Activated T-helper 2 cell treated with anti-CD3 and anti-CD28 coated beads, Interferon-gamma antibody, Interleukin-2, Interleukin-4, amounts not matched to agents 10 μg/mL and 5 μg/mL and 100 μg/mL, durations not matched to agents 14 hours and 24 hours and 36 hours (primary cell): ENCODE measurements at regions of chr13 and their contacts with region 1.

Region 1: DNA sequence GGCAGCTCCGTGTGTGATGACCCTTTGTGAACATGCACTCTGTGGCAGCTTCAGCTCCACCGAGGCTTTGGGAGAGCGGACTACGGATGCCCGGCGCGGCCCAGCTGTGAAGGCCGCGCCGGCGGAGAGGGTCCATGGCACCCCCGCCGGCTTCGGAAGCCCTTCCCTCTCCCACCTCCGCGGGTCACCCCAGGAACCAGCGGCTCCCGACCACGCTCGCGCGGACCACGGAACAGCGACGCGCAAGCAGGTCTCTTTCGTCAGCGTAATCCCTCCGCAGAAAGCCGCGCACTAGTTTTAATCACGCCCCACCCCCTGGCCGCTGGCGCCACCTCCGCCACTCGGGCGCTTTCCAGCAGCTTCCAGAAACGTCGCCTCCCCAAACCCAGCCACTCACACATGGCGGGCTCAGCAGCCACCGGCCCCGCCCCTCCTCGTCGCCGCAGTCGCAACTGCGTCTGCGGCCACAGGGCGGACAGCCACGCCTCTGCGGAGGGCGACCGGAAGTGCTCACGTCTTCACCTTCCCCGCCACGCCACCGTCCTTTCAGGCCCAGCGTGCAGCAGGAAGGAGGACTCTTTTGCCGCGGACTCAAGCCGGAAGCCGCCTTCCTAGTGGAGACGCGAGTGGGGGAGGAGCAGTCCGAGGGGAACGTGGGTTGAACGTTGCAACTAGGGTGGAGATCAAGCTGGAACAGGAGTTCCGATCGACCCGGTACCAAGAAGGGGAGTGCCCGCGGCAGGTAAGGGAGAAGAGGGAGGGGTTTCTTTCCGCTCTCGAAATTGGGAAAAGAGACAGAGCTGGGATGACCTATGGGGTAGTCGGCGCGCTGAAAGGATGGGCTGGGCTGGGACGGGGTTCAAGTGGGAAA is at the start of gene USPL1:
- DNase-seq: peak; percentile 99
- H3K4me3 Mint-ChIP-seq: no peak within 1 kb of the TSS
- H3K27ac Mint-ChIP-seq: no peak within 1 kb of the TSS
- H3K4me1 Mint-ChIP-seq: peaks cover 26% of the 10 kb centered on the region
- H3K27me3 Mint-ChIP-seq: no peaks in the 10 kb centered on the region
- total RNA-seq, gene USPL1: 14.0 and 14.3 TPM in 2 replicates

Region 2: GRCh38 chr13:30142486-30143211 is 474.9 kb before region 1 on chr13:
- intact Hi-C with region 1: loop called (anchors 5 kb)
- DNase-seq: no peak
- H3K4me3 Mint-ChIP-seq: no peak overlapping the region
- H3K27ac Mint-ChIP-seq: peak overlapping the region; percentile 79
- H3K4me1 Mint-ChIP-seq: peaks cover 49% of the 10 kb centered on the region
- H3K27me3 Mint-ChIP-seq: peaks cover 3% of the 10 kb centered on the region

Region 3: DNA sequence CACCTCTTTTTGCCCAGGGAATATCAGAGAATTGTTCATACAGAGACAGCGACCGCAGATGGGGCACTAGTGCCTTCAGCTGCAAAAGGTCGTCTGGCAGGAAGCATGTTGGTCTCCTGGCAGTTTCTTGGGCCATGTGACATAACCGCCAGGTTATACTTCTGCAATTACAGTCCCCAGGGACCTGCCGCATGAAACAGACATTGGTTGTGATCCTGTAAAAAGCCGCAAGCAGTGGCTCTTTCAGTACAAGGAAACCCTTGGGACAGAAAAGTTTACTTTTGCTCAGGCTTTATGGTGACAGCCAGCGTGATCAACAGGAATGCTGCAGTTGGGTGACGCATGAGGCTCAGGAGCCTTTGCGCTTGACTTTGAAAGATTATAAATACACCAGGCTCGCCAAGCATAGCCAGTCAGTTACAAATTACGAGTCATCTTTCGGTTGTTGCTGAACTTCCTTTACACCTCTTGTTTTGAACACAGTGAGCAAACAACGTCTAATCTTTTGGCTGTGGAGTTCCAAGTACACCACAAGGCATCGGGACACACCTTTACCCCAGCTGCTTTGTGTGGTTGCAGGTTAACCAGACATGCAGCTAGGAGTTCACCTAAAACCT is 245.8 kb before region 1 on chr13:
- intact Hi-C with region 1: loop called (anchors 2 kb)
- DNase-seq: peak; percentile 60
- H3K4me3 Mint-ChIP-seq: peak overlapping the region; percentile 56
- H3K27ac Mint-ChIP-seq: peak overlapping the region; percentile 98
- H3K4me1 Mint-ChIP-seq: peaks cover 71% of the 10 kb centered on the region
- H3K27me3 Mint-ChIP-seq: no peaks in the 10 kb centered on the region

Region 4: GRCh38 chr13:30572859-30573275 is 44.7 kb before region 1 on chr13:
- intact Hi-C with region 1: loop called (anchors 1 kb)
- DNase-seq: no peak
- H3K4me3 Mint-ChIP-seq: peak overlapping the region; percentile 62
- H3K27ac Mint-ChIP-seq: peak overlapping the region; percentile 18
- H3K4me1 Mint-ChIP-seq: peaks cover 54% of the 10 kb centered on the region
- H3K27me3 Mint-ChIP-seq: peaks cover 2% of the 10 kb centered on the region

Region 5: GRCh38 chr13:30673669-30674521 is 56.3 kb after region 1 on chr13:
- intact Hi-C with region 1: loop called (anchors 5 kb)
- DNase-seq: peak; percentile 85
- H3K4me3 Mint-ChIP-seq: peak overlapping the region; percentile 86
- H3K27ac Mint-ChIP-seq: peak overlapping the region; percentile 73
- H3K4me1 Mint-ChIP-seq: peaks cover 18% of the 10 kb centered on the region
- H3K27me3 Mint-ChIP-seq: peaks cover 29% of the 10 kb centered on the region

Region 6: DNA sequence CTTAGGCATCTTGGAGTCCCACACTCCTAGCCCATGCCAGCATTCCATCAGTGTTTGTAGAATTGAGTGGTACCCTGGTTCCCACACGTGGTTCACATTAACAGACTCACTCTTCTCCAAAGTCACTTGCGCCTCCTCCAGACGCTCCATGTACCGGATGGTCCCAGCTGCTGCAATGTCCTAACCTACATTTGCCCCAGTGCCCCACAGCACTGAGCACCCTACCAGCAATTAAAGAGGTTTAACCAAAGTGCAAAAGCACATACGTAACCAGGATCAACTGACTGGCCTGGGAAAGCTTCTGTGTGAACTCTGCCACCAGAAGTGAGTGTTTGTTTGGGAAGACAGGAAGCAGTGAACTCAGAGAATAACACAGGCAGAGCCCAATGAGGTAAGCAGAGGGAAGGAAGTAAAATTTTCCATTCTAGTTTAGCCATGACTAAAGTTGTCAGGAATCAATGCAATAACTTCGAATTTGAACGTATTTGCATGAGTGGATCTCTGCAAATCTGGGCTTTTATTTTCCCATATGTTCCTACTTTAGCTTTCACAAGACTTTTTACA is 281.2 kb after region 1 on chr13:
- intact Hi-C with region 1: loop called (anchors 1 kb)
- DNase-seq: no peak
- H3K4me3 Mint-ChIP-seq: no peak overlapping the region
- H3K27ac Mint-ChIP-seq: no peak overlapping the region
- H3K4me1 Mint-ChIP-seq: peaks cover 16% of the 10 kb centered on the region
- H3K27me3 Mint-ChIP-seq: peaks cover 21% of the 10 kb centered on the region